Activated CD8-positive, alpha-beta T cell treated with anti-CD3 and anti-CD28 coated beads, Interleukin-2, amount 10 ng/mL, durations not matched to agents 7 days and 5 days (primary cell): ENCODE measurements at regions of chr5 and their contacts with region 1.

Region 1: DNA sequence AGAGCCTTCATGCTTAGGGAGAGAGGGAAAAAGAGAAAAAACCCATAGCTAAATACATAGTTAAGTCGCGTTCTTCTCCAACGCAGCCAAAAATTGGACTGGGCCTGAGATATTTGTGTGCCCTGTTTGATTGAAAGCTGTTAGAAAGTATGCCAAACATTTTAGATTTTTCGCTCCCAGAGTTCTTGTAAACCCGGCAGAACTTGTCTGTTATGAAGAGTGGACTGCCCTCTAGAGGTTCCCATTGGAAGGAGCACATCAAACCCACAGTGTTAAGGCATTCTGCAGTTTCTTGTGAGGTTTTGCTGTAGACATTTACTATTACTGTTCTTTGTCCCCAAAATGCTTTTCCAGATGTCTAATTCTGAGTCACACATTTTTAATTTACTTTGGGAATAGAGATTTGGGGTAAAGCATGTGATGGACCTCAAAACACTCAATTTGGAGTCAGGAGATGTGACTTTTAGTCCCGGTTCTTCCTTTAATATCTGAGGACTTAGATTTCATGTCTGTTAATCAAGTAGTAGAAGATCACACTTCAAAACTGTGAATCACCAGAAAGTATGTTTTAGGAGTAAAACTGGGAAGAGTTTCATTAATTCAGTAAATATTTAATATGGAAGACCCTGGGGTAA is 96.6 kb downstream of the PCSK1 start:
- DNase-seq: peak; percentile 73
- ATAC-seq: peak; percentile 84
- H3K4me3 Mint-ChIP-seq: no peak overlapping the region
- H3K27ac Mint-ChIP-seq: no peak overlapping the region
- H3K4me1 Mint-ChIP-seq: no peaks in the 10 kb centered on the region
- H3K27me3 Mint-ChIP-seq: peaks cover 17% of the 10 kb centered on the region

Region 2: GRCh38 chr5:95853490-95853889 is 483.0 kb before region 1 on chr5:
- CTCF ChIA-PET with region 1: interaction called, 79 read pairs
- POLR2A ChIA-PET with region 1: no interaction called
- DNase-seq: no peak
- ATAC-seq: no peak
- H3K4me3 Mint-ChIP-seq: no peak overlapping the region
- H3K27ac Mint-ChIP-seq: no peak overlapping the region
- H3K4me1 Mint-ChIP-seq: peaks cover 8% of the 10 kb centered on the region
- H3K27me3 Mint-ChIP-seq: peaks cover 10% of the 10 kb centered on the region

Region 3: DNA sequence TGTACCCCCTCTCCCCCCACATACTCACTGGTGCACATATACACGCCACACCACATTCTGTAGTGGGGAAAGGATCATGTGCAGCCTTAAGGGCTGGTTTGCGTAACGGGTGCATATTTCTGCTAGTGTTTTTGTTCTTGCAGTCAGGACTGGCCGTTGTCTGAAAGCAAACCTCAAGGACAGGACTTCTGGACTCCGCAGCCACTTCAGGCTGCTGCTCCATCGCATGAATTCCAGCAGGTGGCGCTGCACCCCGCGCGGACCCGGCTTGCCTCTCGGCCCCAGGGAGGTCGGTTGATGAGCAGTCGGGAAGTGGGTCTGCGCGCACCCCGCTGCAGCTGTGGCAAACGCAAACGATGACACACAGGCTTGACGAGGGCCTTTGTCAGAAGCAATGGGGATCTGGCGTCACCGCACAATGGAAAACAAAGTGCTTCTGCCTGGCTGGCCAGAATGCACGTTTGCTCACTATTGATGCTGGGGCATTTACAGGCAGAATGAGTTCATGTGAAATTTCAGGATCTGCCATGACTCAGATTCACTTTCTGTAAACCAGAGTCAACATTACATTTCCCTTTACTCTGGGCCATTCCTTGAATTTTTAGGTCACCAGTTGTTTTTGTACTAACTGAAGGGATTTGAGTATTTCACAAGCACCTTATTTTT is 477.7 kb before region 1 on chr5:
- CTCF ChIA-PET with region 1: interaction called, 79 read pairs
- POLR2A ChIA-PET with region 1: interaction called, 4 read pairs
- DNase-seq: peak; percentile 91
- ATAC-seq: peak; percentile 96
- H3K4me3 Mint-ChIP-seq: peak overlapping the region; percentile 36
- H3K27ac Mint-ChIP-seq: peak overlapping the region; percentile 60
- H3K4me1 Mint-ChIP-seq: peaks cover 44% of the 10 kb centered on the region
- H3K27me3 Mint-ChIP-seq: peaks cover 2% of the 10 kb centered on the region

Region 4: DNA sequence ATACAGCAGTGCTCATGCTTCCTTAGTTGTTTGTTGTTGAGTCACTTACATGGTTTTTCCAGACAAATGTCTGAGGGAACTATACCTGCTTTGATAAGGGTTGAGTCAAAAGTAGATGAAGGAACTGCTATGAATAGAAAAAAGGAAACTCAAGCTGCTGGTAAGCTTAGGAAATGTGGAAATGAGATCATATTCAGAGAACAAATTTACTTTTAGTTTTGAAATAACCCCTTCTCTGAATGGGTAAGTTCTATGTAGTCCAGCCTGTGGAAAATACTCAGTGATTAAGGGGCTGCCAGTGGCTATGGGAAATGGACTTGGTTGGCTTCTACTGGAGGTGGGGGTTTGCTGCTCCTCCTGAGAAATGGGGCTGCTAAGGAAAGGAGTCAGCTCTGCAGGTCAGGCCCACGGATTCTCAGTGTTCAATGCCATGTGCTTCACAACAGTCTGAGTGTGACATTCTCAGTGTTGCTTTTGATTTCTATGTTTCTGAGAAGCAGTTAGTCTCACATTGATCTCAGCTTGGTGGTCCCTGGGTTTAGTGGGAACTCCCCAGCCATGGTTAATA is 466.3 kb before region 1 on chr5:
- CTCF ChIA-PET with region 1: interaction called, 17 read pairs
- POLR2A ChIA-PET with region 1: no interaction called
- DNase-seq: peak; percentile 42
- ATAC-seq: peak; percentile 56
- H3K4me3 Mint-ChIP-seq: peak overlapping the region; percentile 69
- H3K27ac Mint-ChIP-seq: peak overlapping the region; percentile 91
- H3K4me1 Mint-ChIP-seq: peaks cover 31% of the 10 kb centered on the region
- H3K27me3 Mint-ChIP-seq: no peaks in the 10 kb centered on the region

Region 5: GRCh38 chr5:95892780-95893354 is 443.6 kb before region 1 on chr5:
- CTCF ChIA-PET with region 1: interaction called, 17 read pairs
- POLR2A ChIA-PET with region 1: no interaction called
- DNase-seq: peak; percentile 63
- ATAC-seq: peak; percentile 61
- H3K4me3 Mint-ChIP-seq: no peak overlapping the region
- H3K27ac Mint-ChIP-seq: no peak overlapping the region
- H3K4me1 Mint-ChIP-seq: peaks cover 6% of the 10 kb centered on the region
- H3K27me3 Mint-ChIP-seq: no peaks in the 10 kb centered on the region

Region 6: GRCh38 chr5:96601811-96602244 is 265.4 kb after region 1 on chr5:
- CTCF ChIA-PET with region 1: interaction called, 222 read pairs
- POLR2A ChIA-PET with region 1: no interaction called
- DNase-seq: peak; percentile 74
- ATAC-seq: peak; percentile 79
- H3K4me3 Mint-ChIP-seq: no peak overlapping the region
- H3K27ac Mint-ChIP-seq: no peak overlapping the region
- H3K4me1 Mint-ChIP-seq: no peaks in the 10 kb centered on the region
- H3K27me3 Mint-ChIP-seq: peaks cover 8% of the 10 kb centered on the region